Transverse colon (tissue), 4 donors: ENCODE measurements at regions of chr9 and their contacts with region 1.

Region 1: GRCh38 chr9:5939530-5939929 is 48.8 kb downstream of the MLANA start:
- DNase-seq: no peak
- H3K4me3 ChIP-seq: no peak overlapping the region
- H3K27ac ChIP-seq: no peak overlapping the region
- H3K4me1 ChIP-seq: no peaks in the 10 kb centered on the region
- H3K27me3 ChIP-seq: no peaks in the 10 kb centered on the region
- CTCF ChIP-seq: no peak
- EP300 ChIP-seq: no peak
- POLR2A ChIP-seq: no peak

Region 2: DNA sequence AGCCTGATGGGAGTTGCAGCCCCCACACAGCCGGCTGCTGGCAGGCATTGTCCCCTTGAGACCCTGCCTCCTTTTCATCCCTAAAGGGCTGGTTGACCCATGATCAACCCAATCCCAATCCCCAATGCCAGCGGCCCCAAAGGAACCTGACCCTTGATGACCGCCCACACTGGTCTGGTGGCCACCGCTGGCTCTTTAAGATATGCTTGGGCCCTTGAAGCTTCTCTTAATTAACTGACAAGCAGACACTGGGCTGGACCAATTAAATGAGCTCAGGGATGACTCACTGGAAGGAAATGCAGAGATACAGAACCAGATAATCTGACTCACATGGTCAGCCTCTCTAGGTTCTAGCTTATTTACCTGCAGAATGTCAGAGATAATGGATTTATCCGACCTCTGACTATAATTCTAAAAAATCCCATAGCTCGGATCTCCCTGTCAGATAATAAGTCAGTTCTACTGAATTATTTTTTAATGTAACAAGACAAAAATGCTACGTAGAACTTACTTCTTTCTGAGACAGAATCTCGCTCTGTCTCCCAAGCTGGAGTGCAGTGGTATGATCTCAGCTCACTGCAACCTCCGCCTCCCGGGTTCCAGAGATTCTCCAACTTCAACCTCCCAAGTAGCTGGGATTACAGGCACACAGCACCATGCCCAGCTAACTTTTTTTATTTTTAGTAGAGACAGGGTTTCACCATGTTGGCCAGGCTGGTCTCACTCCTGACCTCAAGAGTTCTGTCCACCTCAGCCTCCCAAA is 59.9 kb before region 1 on chr9:
- in situ Hi-C with region 1: loop called in 1 of 4 experiments (anchors 10 kb)
- intact Hi-C with region 1: no loop called
- DNase-seq: no peak
- H3K4me3 ChIP-seq: no peak overlapping the region
- H3K27ac ChIP-seq: no peak overlapping the region
- H3K4me1 ChIP-seq: no peaks in the 10 kb centered on the region
- H3K27me3 ChIP-seq: no peaks in the 10 kb centered on the region
- CTCF ChIP-seq: no peak
- EP300 ChIP-seq: no peak
- POLR2A ChIP-seq: no peak